HCT116 (cell line): ENCODE measurements at regions of chr3 and their contacts with region 1.

Region 1: DNA sequence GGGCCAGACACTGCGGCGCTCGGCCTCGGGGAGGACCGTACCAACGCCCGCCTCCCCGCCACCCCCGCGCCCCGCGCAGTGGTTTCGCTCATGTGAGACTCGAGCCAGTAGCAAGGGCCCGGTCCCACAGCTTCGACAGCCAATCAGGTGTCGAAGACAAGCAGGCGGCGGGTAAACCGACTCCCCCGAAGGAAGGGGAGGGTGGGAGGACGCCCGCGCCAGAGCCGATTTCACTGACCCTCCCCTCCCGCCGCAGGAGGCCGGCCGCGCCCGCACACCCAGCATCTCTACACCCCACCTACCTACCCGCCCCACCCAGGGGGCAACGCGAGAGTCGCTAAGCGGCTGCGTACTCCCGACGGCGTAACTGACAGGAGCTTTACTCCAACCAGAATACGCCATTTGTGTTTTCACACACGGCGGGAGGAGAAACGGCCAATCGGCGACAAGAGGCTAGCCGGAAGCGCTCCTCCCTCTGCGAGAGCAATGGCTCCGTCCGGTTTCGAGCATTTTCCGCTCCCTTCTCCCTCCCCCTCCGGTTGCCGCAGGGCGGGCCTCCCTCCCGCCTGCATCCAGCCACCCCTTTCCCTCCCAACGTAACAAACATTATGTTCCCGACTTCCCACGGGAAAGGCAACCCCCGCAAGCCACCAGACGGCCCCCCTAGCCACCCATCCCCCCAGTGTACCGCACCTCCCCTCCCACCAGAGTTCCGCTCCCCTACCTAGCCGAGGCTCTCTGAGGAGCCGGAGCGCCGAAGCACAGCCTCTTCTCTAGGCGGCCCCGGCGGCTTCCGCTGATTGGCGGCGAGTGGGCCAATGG is 504 bp upstream of the SETD5 start:
- DNase-seq: peak; percentile 98
- ATAC-seq: peak; percentile 76
- H3K4me3 ChIP-seq: peak overlapping the region; percentile 63 to 98
- H3K27ac ChIP-seq: peak overlapping the region; percentile 93
- H3K4me1 ChIP-seq: peaks cover 26 to 46% of the 10 kb centered on the region in 2 experiments
- H3K27me3 ChIP-seq: no peaks in the 10 kb centered on the region
- CTCF ChIP-seq: no peak
- POLR2A ChIP-seq: peak; percentile 50
- RAD21 ChIP-seq: no peak

Region 2: DNA sequence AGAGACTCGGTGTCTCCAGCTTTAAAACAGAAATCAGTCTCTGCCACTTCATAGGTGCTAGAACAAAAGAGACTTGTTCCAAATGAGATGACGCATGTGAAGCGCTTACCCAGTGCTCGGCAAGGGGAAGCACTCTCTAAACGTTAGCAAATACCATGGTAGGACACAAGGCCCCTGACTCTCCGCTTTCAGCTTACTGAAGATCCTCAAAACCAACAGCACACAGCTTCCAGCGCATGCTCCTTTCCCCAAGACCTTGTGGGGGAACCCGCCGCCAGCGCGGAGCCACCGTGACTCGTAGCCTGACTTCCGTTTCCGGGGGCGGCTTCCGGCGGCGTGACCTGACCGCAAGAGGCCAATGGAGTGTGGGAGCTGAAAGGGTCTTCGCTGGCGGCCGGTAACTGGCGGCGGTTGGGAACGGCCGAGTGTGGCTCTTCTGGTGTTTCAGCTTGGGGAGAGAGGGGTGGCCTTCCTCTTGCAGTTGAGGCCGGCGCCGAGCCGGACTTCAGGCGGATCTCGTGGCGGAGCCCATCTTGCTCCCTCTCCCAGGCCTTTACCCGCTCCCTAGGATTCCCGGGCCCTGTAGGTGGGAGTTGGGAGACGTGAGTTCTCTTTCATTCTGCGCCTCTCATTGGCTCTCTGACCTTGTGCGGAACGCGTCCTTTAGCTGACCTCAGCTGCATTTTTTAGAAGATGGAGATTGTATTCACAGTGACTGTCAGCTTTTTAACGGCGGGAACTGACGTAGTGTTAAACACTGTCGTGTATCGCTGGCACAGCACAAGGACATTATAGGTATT is 34.0 kb before region 1 on chr3 and contains the start of gene THUMPD3:
- CTCF ChIA-PET with region 1: no interaction called
- POLR2A ChIA-PET with region 1: interaction called, 24 read pairs
- RAD21 ChIA-PET with region 1: no interaction called
- intact Hi-C with region 1: no loop called
- DNase-seq: peak; percentile 82
- ATAC-seq: peak; percentile 94
- H3K4me3 ChIP-seq: peak within 1 kb of the TSS; percentile 74 to 83
- H3K27ac ChIP-seq: peak within 1 kb of the TSS; percentile 94
- H3K4me1 ChIP-seq: peaks cover 4 to 13% of the 10 kb centered on the region in 2 experiments; a peak in 3 of 4 replicates
- H3K27me3 ChIP-seq: no peaks in the 10 kb centered on the region
- CTCF ChIP-seq: no peak
- POLR2A ChIP-seq: peak; percentile 93
- RAD21 ChIP-seq: no peak
- total RNA-seq, gene THUMPD3: 79.5 TPM

Region 3: DNA sequence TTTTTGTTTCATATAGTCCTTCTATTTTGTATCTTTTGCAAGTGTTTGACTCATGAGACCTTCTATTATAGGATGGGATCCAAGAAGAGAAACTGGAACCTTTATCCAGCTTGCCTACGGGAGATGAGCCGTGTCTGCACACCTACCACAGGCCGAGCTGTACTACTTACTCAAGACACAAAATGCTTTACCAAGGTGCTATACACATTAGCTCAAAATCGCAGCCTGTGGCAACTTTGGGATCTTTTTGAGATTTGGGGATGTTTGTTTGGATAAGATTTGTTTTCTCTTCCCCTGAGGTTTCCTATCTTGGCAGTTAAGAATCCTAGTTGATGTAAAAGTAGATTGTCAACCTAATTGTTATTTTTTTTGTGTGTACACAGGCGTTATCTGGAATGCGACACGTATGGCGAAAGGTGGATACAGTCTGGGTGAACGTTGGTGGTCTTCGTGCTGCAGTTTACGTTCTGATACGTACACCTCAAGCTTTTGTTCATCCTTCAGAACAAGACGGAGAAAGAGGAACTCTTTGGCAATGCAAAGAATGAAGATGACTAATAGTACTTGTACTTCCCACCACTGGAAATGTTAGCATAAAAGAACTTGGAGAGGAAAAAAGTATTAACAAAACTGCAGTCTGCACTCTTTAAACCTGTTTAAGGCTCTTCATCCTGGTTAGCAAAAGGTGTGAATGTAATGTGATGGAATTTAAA is 12.6 kb before region 1 on chr3:
- CTCF ChIA-PET with region 1: no interaction called
- POLR2A ChIA-PET with region 1: interaction called, 13 read pairs
- RAD21 ChIA-PET with region 1: no interaction called
- intact Hi-C with region 1: no loop called
- DNase-seq: no peak
- ATAC-seq: no peak
- H3K4me3 ChIP-seq: no peak overlapping the region
- H3K27ac ChIP-seq: no peak overlapping the region
- H3K4me1 ChIP-seq: no peaks in the 10 kb centered on the region
- H3K27me3 ChIP-seq: no peaks in the 10 kb centered on the region
- CTCF ChIP-seq: no peak
- POLR2A ChIP-seq: no peak
- RAD21 ChIP-seq: no peak

Region 4: DNA sequence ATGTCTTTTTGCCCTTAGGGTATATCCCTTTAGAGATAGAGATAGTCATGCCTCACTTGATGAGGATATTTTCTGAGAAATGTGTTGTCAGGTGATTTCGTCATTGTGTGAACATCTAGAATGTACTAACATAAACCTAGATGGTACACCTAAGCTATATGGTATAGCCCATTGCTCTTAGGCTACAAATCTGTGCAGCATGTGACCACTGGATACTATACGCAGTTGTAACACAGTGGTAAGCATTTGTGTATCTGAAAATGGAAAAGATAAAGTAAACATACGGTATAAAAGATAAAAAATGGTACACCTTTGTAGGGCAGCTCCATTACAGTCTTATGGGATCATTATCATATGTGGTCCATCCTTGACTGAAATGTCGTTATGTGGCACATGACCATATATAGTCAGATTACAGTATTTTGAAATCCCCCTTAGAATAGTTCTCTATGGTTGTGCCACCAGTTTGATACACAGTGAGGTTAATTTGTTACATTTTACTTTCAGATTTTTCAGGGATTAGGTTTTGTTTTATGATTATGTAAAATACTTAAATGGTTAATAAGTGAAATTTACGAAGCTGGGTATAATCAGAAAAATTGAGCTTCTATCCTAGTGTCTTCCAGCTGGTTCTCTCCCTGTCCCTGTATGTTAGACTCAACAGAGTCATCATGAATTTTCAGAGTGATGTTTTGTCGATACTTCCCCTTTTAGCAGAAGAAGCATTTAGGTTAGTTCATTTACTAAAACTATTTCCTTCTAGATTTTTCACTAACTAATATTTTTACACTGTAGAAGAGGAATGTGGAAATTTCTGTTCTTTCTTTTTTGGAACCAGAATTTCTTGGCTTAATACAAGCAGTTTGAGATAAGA is 13.3 kb after region 1 on chr3:
- CTCF ChIA-PET with region 1: no interaction called
- POLR2A ChIA-PET with region 1: interaction called, 16 read pairs
- RAD21 ChIA-PET with region 1: no interaction called
- intact Hi-C with region 1: no loop called
- DNase-seq: no peak
- ATAC-seq: no peak
- H3K4me3 ChIP-seq: no peak overlapping the region
- H3K27ac ChIP-seq: no peak overlapping the region
- H3K4me1 ChIP-seq: no peaks in the 10 kb centered on the region; a peak in 1 of 4 replicates
- H3K27me3 ChIP-seq: no peaks in the 10 kb centered on the region
- CTCF ChIP-seq: no peak
- POLR2A ChIP-seq: no peak
- RAD21 ChIP-seq: no peak

Region 5: GRCh38 chr3:9422712-9423424 is 26.0 kb after region 1 on chr3:
- CTCF ChIA-PET with region 1: interaction called, 7 read pairs
- POLR2A ChIA-PET with region 1: interaction called, 46 read pairs
- RAD21 ChIA-PET with region 1: interaction called, 3 to 5 read pairs
- intact Hi-C with region 1: loop called (anchors 1 kb)
- DNase-seq: peak; percentile 91
- ATAC-seq: peak; percentile 88
- H3K4me3 ChIP-seq: no peak overlapping the region; a peak in 1 of 4 replicates
- H3K27ac ChIP-seq: peak overlapping the region; percentile 65
- H3K4me1 ChIP-seq: peaks cover 43 to 45% of the 10 kb centered on the region in 2 experiments
- H3K27me3 ChIP-seq: no peaks in the 10 kb centered on the region
- CTCF ChIP-seq: peak; percentile 15 to 71 (median 58); a peak in 5 of 6 replicates
- POLR2A ChIP-seq: no peak
- RAD21 ChIP-seq: peak; percentile 60